Heart right ventricle (tissue), 16 donors: ENCODE measurements at regions of chr7 and their contacts with region 1.

Region 1: DNA sequence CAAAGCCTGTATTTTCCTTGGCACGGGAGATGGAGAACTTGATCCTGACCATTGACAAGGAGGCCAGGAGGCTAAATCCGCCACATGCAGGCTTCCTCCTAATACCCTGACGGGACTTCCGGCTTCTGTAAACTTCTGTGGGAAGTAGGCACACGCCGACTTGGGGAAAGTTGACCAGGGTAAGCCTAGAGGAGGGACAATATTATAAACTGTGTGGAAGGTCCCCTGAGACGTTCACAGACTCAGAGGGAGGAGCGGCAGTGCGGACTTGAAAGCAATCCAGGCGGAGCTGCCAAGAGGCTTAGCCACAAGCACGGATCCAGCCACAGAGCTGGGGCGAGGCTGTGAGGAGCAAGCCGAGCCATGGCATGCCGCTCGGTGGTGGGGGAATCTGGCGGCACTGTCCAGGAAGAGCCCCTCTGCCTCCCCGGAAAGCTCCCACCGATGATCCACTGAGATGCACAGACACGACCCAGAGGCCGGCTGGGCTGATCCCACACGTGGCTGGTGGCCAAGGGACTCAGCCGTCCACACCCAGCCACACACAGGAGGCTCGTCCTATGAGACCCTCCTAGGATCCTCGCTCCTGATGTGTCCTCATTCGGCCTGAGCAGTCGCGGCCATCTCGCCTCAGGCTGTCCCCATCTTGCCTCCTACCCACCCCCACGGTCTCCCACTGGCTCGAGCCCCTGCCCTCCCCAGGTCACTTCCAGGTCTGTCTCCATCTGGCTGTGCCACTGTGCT is 40.0 kb upstream of the INSIG1 start:
- DNase-seq: peak; percentile 82 to 83
- ATAC-seq: peak; percentile 79 to 94 (median 90)
- H3K4me3 ChIP-seq: peak overlapping the region in 6 of 10 donors; percentile 9 to 33 (median 21)
- H3K27ac ChIP-seq: peak overlapping the region; percentile 51 to 85 (median 72)
- H3K4me1 ChIP-seq: peaks cover 7 to 24% (median 15%) of the 10 kb centered on the region in 9 donors
- H3K27me3 ChIP-seq: peaks cover 0 to 6% (median 0%) of the 10 kb centered on the region in 7 donors
- CTCF ChIP-seq: no peak

Region 2: DNA sequence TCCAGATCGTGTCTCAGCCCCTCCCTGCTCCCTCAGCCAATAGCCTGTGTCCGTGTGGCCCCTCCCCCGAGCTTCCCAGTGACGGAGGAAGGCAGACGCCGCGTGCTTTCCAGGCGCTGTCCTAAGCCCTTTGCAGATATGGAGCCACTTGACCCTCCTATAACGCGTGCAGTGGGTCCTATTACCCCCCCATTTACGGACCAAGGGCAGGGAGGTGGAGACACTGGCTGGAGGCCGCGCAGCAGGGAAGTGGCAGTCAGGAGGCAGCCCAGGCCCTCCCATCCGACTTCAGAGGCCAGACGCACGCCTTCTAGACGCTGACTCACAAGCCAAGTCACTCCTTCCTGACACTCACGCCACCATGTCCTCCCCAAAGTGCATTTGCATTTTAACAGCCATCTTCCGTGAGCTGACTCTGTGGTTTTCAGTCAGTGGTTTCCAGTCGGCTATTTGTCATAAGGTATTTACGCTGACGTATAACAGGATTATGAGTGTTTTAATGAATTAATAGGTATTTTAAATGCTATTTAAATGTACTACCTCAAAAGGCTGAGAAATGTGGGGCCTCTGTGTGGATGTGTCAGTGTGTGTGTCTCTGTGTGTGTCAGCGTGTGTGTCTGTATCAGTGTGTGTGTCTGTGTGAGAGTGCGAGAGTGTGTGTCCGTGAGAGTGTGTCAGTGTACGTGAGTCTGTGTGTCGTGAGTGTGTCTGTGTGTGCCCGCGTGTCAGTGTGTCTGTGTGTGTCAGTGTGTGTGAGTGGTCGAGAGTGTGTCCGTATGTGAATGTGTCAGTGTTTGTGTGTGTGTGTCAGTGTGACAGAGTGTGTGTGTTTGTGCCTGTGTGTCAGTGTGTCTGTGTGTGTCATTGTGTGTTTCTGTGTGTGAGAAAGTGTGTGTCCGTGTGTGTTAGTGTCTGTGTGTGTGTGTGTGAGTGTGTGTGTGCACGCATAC is 52.0 kb before region 1 on chr7:
- intact Hi-C with region 1: loop called in 4 of 10 experiments (anchors 2 to 10 kb)
- DNase-seq: peak; percentile 81 to 86
- ATAC-seq: peak; percentile 84 to 91 (median 88)
- H3K4me3 ChIP-seq: peak overlapping the region in 9 of 10 donors; percentile 12 to 54 (median 39)
- H3K27ac ChIP-seq: peak overlapping the region; percentile 59 to 94 (median 84)
- H3K4me1 ChIP-seq: peaks cover 0 to 28% (median 11%) of the 10 kb centered on the region in 9 donors
- H3K27me3 ChIP-seq: peaks cover 0 to 25% (median 3%) of the 10 kb centered on the region in 7 donors
- CTCF ChIP-seq: peak in 2 of 9 donors; percentile 9 to 18

Region 3: DNA sequence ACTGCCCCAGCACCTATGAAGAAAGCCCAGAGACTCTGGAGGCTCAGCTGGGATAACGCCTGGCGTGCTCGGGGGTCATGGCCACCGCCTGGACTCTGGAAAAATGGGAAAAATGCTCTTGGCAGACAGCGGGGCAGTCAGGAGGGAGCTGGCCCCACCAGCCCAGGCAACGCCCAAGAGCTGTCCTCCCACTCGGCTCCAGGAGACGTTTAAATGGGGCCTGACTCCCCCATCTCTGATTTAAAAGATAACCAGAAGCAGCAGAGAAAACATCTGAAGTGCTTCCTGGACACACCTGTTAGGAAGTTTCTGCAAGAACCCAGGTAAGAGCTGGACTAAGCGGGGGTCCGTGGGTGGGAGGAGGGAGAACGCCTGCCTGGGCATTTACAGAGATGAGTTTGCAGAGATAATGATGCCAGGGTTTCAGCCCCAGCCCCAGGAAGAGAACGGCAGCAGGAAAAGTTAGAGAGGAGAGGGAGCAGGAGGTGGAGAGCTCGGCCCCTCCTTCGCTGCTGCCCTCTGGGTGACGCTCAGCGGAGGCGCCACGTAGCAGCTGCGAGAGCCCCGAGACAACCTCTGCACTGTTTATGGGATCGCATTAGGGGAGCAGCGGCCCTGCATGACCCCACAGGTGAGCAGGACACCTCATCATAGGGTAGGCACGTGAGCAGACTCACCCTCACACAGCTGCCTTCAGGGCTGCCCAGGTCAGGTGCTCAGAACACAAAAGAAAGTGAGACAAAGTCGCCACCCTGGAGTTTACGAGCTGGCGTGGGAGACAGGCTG is 43.5 kb before region 1 on chr7:
- intact Hi-C with region 1: loop called in 4 of 10 experiments (anchors 2 to 10 kb)
- DNase-seq: no peak
- ATAC-seq: peak in 2 of 8 donors; percentile 18 to 46
- H3K4me3 ChIP-seq: peak overlapping the region in 3 of 10 donors; percentile 10 to 14 (median 10)
- H3K27ac ChIP-seq: no peak overlapping the region
- H3K4me1 ChIP-seq: peaks cover 0 to 16% (median 7%) of the 10 kb centered on the region in 9 donors
- H3K27me3 ChIP-seq: peaks cover 0 to 66% (median 47%) of the 10 kb centered on the region in 7 donors
- CTCF ChIP-seq: no peak